Caco-2 (cell line): ENCODE measurements at regions of chr6 and their contacts with region 1.

Region 1: DNA sequence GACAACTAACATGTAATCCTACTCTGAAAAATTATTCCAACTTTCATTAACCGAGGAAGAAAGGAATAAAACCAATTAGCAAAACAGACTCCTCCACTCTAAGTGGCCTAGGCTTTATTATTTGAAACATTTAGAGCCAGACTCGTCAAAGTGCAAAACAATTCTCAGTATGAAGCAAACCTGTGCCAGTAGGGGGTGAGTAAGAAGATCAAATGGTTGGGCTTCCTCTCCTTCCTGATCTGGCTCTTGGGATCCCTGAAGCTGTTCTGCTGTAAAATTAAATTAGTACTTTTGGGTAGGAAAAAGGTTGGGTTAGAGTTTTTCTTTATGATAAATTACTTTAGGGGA is 177.6 kb upstream of the MAN1A1 start:
- DNase-seq: no peak
- H3K4me3 ChIP-seq: no peak overlapping the region
- H3K4me3 Mint-ChIP-seq: no peak overlapping the region
- H3K27ac Mint-ChIP-seq: no peak overlapping the region
- H3K4me1 ChIP-seq: no peaks in the 10 kb centered on the region
- H3K4me1 Mint-ChIP-seq: no peaks in the 10 kb centered on the region
- H3K27me3 ChIP-seq: no peaks in the 10 kb centered on the region
- H3K27me3 Mint-ChIP-seq: peaks cover 12% of the 10 kb centered on the region
- CTCF ChIP-seq: no peak

Region 2: DNA sequence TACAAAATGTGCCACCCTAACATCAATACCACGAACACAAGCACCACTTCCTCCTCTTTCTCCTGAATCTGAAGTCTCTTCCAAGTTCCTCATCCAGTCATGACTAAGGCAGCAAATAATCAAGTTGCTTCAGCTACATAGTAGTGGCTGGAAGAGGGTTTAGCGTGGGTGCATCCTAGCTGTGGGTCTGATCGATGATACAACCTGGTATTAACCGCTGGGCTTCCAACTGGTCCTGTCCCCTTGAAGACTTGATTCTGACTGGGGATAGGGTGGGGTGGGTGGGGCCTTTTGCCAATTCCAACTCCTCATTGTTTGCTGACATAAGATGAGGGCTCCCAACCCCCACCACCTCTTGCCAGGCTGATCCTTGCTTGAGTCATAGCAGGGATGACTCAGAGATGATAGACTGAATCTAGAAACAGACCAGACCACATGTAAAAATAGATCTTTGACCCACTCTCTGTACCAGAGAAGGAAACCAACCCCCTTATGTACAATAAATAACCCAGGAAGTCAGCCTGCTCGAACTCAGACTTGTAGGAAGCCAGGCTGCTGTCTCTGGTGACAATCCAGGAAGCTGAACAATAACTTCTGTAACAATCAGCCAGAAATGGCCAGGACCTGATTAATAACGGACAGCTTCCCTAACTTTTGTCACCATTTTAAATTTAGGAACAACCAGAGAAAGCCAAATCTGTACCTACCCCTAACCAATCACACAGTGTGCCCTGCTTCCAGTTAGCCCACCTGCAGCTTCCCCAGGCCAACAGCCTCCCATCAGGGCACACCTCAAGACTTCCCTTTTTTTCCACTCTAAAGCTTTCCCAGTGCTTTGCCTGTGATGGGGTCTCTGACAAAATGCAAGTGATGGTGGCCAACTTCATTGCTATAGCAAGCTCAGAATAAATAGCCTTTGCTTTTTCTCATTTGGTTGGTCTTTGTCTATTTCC is 379.8 kb before region 1 on chr6:
- CTCF ChIA-PET with region 1: no interaction called
- POLR2A ChIA-PET with region 1: no interaction called
- intact Hi-C with region 1: loop called (anchors 10 kb)
- DNase-seq: peak; percentile 21 to 53
- H3K4me3 ChIP-seq: no peak overlapping the region
- H3K4me3 Mint-ChIP-seq: no peak overlapping the region
- H3K27ac Mint-ChIP-seq: peak overlapping the region; percentile 66
- H3K4me1 ChIP-seq: peaks cover 18% of the 10 kb centered on the region
- H3K4me1 Mint-ChIP-seq: peaks cover 22% of the 10 kb centered on the region
- H3K27me3 ChIP-seq: no peaks in the 10 kb centered on the region
- H3K27me3 Mint-ChIP-seq: no peaks in the 10 kb centered on the region
- CTCF ChIP-seq: no peak

Region 3: GRCh38 chr6:119514345-119514744 is 12.9 kb before region 1 on chr6:
- CTCF ChIA-PET with region 1: no interaction called
- POLR2A ChIA-PET with region 1: no interaction called
- intact Hi-C with region 1: no loop called
- DNase-seq: no peak
- H3K4me3 ChIP-seq: no peak overlapping the region
- H3K4me3 Mint-ChIP-seq: no peak overlapping the region
- H3K27ac Mint-ChIP-seq: no peak overlapping the region
- H3K4me1 ChIP-seq: no peaks in the 10 kb centered on the region
- H3K4me1 Mint-ChIP-seq: no peaks in the 10 kb centered on the region
- H3K27me3 ChIP-seq: no peaks in the 10 kb centered on the region
- H3K27me3 Mint-ChIP-seq: peaks cover 10% of the 10 kb centered on the region
- CTCF ChIP-seq: no peak

Region 4: GRCh38 chr6:119552021-119552420 is 24.8 kb after region 1 on chr6:
- CTCF ChIA-PET with region 1: no interaction called
- POLR2A ChIA-PET with region 1: no interaction called
- intact Hi-C with region 1: no loop called
- DNase-seq: no peak
- H3K4me3 ChIP-seq: no peak overlapping the region
- H3K4me3 Mint-ChIP-seq: no peak overlapping the region
- H3K27ac Mint-ChIP-seq: no peak overlapping the region
- H3K4me1 ChIP-seq: no peaks in the 10 kb centered on the region
- H3K4me1 Mint-ChIP-seq: no peaks in the 10 kb centered on the region
- H3K27me3 ChIP-seq: no peaks in the 10 kb centered on the region
- H3K27me3 Mint-ChIP-seq: peaks cover 3% of the 10 kb centered on the region
- CTCF ChIP-seq: no peak